Endothelial cell of umbilical vein (primary cell): ENCODE measurements at regions of chr11 and their contacts with region 1.

Region 1: DNA sequence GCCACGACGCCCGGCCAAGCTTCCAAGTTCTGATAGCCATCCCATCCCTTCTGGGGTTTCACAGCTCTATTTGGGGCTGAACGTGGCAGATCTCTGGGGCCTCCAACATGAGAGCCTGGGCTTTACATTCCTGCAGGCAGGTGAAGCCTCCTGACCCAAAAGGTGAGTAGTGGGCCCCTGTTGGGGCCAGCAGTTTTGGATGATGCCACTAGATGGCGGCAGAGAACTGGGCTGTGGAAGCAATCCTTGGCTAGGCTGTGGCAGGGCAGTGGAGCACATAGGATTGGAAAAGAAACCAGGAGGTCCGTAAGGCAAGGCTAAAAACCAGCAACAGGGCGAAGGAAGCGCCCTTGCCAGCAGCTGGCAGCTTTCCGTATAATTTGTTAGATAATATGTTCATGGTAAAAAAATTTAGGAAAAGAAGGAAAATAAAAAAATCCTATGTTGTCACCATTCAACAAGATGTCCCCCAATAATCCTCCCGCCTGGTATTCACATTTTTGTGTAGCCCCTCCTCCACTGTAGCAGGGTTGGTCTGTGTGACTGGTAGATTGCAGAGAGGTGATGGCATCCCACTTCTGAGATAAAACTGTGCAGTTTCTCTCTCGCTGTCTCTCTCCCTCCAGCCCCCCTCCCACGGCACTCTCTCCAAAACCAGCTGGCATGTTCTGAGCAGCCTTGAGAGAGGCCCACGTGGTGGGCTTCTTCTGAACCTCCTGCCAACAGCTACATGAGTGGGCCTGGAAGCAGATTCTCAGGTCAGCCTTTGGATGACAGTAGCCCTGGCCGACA is 43.6 kb upstream of the OR4B1 start:
- DNase-seq: peak; percentile 52
- H3K4me3 ChIP-seq: no peak overlapping the region
- H3K27ac ChIP-seq: no peak overlapping the region
- H3K4me1 ChIP-seq: peaks cover 6% of the 10 kb centered on the region
- H3K27me3 ChIP-seq: no peaks in the 10 kb centered on the region
- CTCF ChIP-seq: peak; percentile 84 to 98
- POLR2A ChIP-seq: no peak

Region 2: GRCh38 chr11:48116437-48117228 is 56.4 kb before region 1 on chr11:
- CTCF ChIA-PET with region 1: interaction called, 6 read pairs
- POLR2A ChIA-PET with region 1: no interaction called
- dilution Hi-C with region 1: no loop called
- intact Hi-C with region 1: loop called (anchors 2 kb)
- DNase-seq: peak; percentile 39
- H3K4me3 ChIP-seq: no peak overlapping the region
- H3K27ac ChIP-seq: no peak overlapping the region
- H3K4me1 ChIP-seq: no peaks in the 10 kb centered on the region
- H3K27me3 ChIP-seq: no peaks in the 10 kb centered on the region
- CTCF ChIP-seq: peak; percentile 49 to 54
- POLR2A ChIP-seq: no peak

Region 3: DNA sequence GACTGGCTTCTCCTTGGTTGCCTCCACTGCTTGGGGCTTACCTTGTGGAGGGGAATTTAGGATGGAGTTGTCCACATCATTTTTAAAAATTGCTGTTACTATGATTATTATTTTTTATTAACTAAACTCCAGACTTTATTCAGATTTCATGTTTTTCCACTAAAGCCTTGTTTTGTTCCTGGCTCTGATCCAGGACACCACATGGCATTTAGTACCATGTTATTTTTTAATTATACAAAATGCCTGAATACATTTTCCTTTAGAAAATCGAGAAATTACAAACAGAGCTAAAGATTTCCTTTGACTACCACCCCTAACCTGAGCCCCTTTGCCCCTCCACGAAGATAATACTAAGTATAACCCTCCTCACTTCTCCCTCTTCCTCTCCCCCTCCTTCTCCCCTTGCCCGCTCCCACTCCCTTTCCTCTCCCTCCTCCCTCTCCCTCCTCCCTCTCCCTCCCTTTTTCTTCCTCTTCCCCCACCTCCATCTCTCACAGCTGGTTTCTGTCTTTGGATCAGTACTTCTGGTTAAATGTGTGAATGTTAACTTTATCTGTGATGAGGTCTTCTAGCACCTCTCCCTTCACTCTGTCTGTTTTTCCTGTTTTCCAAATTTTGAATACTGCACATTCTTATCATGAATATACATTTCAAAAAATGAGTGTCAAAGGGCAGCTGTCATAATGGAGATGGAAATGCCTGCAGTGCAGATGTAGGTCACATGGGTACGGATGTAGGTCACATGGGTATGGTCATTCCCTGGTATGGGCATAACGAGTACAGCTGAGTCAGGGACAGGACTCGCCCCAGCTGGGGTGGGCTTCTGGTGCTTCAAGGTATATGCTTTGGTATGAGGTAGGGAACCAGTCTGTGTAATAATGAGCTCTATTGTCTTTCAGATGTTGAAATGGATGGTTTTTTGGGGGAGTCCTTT is 10.8 kb before region 1 on chr11:
- CTCF ChIA-PET with region 1: interaction called, 11 read pairs
- POLR2A ChIA-PET with region 1: no interaction called
- dilution Hi-C with region 1: no loop called
- intact Hi-C with region 1: no loop called
- DNase-seq: peak; percentile 24
- H3K4me3 ChIP-seq: no peak overlapping the region
- H3K27ac ChIP-seq: no peak overlapping the region
- H3K4me1 ChIP-seq: peaks cover 2% of the 10 kb centered on the region
- H3K27me3 ChIP-seq: no peaks in the 10 kb centered on the region
- CTCF ChIP-seq: no peak
- POLR2A ChIP-seq: no peak

Region 4: DNA sequence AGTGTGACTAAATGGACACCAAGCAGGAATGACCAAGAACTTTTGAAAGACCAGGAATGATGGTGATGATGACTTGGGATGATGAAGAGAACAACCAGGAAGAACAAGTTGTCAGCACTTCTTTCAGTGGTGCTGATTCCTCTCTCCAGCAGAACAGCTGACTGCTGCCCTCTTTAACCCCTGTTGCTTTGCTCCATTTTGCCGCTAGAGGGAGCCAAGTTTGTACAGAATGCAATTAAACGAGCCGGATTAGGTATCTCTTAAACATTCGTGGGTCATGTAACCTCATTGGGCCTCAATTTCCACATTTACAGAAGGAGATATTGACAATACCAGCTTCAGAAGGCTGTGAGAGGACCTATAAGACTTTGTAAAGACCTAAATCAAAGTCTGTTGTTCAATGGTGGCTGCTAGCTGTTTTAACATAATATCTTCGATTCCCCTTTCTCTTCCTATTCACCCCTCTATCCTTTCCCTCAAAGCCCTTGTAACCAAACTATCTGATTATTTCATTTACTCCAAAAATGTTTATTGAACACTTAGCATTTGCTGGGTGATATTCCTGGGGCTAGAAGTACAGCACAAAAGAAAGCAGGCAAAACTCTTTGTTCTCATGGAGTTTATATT is 134.9 kb after region 1 on chr11:
- CTCF ChIA-PET with region 1: no interaction called
- POLR2A ChIA-PET with region 1: no interaction called
- dilution Hi-C with region 1: no loop called
- intact Hi-C with region 1: loop called (anchors 5 kb)
- DNase-seq: peak; percentile 45
- H3K4me3 ChIP-seq: no peak overlapping the region
- H3K27ac ChIP-seq: no peak overlapping the region
- H3K4me1 ChIP-seq: no peaks in the 10 kb centered on the region
- H3K27me3 ChIP-seq: no peaks in the 10 kb centered on the region
- CTCF ChIP-seq: peak; percentile 71 to 89
- POLR2A ChIP-seq: no peak

Region 5: DNA sequence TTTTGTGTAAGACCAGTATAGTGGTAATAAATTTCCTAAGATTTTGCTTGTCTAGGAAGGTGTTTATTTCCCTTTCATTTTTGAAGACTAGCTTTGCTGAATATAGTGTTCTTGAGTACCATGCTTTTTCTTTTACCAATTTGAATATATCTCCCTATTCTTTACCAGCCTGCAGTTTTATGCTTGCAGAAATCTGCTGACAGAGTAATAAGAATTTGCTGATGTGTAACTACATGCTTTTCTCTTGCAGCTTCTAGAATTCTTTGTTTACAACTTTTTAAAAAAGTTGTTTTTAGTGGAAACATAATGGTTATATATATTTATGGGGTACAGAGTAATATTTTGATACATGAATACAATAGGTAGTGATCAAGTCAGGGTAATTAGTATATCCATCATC is 1360.2 kb after region 1 on chr11:
- CTCF ChIA-PET with region 1: no interaction called
- POLR2A ChIA-PET with region 1: no interaction called
- dilution Hi-C with region 1: no loop called
- intact Hi-C with region 1: loop called (anchors 5 kb)
- DNase-seq: no peak
- H3K4me3 ChIP-seq: no peak overlapping the region
- H3K27ac ChIP-seq: no peak overlapping the region
- H3K4me1 ChIP-seq: no peaks in the 10 kb centered on the region
- H3K27me3 ChIP-seq: no peaks in the 10 kb centered on the region
- CTCF ChIP-seq: no peak
- POLR2A ChIP-seq: no peak

Region 6: GRCh38 chr11:49995565-49995964 is 1822.6 kb after region 1 on chr11:
- CTCF ChIA-PET with region 1: interaction called, 11 read pairs
- POLR2A ChIA-PET with region 1: no interaction called
- dilution Hi-C with region 1: no loop called
- intact Hi-C with region 1: no loop called
- DNase-seq: peak; percentile 6
- H3K4me3 ChIP-seq: no peak overlapping the region
- H3K27ac ChIP-seq: no peak overlapping the region
- H3K4me1 ChIP-seq: no peaks in the 10 kb centered on the region
- H3K27me3 ChIP-seq: no peaks in the 10 kb centered on the region
- CTCF ChIP-seq: peak; percentile 38 to 48
- POLR2A ChIP-seq: no peak